Activated naive CD4-positive, alpha-beta T cell treated with anti-CD3 and anti-CD28 coated beads for 36 hours (primary cell): ENCODE measurements at regions of chr20 and their contacts with region 1.

Region 1: DNA sequence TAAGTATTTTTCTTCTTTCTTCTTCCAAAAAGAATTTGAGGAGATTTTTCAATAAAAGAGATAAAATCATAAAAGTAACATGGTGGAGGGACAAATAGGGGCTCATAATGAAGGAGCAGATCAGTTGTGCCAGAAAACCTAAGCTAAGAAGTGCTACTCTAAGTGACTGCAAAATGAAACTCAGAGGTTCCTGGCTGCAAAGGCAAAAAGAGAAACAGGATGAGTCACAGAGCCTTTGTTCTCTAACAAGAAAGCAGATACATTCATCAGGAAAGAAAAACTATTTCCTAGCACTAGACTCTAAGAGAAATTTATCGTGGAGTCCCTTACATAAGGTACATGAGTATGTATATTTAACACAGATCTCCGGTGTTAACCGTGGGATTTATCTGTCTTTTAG is 49.8 kb downstream of the TSHZ2 start:
- DNase-seq: peak; percentile 64
- H3K4me3 Mint-ChIP-seq: peak overlapping the region; percentile 29
- H3K27ac Mint-ChIP-seq: peak overlapping the region; percentile 93
- H3K4me1 Mint-ChIP-seq: peaks cover 85% of the 10 kb centered on the region
- H3K27me3 Mint-ChIP-seq: no peaks in the 10 kb centered on the region

Region 2: GRCh38 chr20:53034899-53035298 is 13.0 kb after region 1 on chr20:
- CTCF ChIA-PET with region 1: no interaction called
- intact Hi-C with region 1: no loop called
- DNase-seq: peak; percentile 57
- H3K4me3 Mint-ChIP-seq: no peak overlapping the region
- H3K27ac Mint-ChIP-seq: peak overlapping the region; percentile 72
- H3K4me1 Mint-ChIP-seq: peaks cover 59% of the 10 kb centered on the region
- H3K27me3 Mint-ChIP-seq: no peaks in the 10 kb centered on the region

Region 3: DNA sequence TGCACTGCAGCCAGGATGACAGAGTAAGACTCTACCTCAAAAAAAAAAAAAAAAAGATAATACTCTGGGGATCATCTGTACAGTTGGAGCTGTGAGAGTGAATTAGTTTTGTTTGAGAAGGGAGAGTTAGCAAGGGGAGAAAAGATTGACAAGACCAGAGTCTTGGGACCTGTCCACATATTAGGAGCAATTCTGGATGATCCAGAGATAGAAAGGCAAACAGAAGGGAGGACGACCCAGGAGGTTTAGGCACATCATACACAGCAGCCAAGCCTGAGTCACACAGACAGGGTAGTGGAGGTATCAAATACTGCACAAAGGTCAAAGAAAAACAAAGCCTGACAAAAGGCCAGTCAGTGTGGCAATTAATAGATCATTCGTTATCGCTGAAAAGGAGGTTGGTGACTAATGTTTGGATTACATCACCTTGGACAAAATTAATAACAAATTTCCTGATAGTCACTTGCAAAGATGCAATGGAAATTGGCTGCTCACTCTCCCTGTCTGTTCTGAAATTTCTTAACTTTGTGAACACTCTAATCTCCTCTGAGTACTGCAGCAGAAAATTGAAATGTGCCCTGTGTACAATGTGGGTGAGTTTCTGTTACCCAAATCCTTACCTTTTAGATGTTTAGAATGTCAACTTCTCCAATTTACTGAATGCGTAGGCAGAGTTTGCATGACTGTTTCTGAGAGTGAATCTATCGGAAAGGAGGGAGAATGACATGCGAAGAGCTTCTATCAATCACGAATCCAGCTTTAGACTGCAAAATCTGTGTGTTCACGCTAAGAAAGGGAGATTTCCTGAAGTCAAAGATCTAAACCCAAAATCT is 55.7 kb after region 1 on chr20:
- CTCF ChIA-PET with region 1: no interaction called
- intact Hi-C with region 1: loop called (anchors 1 kb)
- DNase-seq: peak; percentile 59
- H3K4me3 Mint-ChIP-seq: no peak overlapping the region
- H3K27ac Mint-ChIP-seq: no peak overlapping the region
- H3K4me1 Mint-ChIP-seq: peaks cover 46% of the 10 kb centered on the region
- H3K27me3 Mint-ChIP-seq: no peaks in the 10 kb centered on the region